ENCODE measurements at regions of chr5 and their contacts with region 1.

Region 1: GRCh38 chr5:154196955-154197652 is 6.6 kb downstream of the GALNT10 start:
- DNase-seq: peak; percentile 87
- ATAC-seq: peak; percentile 67
- H3K4me3 ChIP-seq: no peak overlapping the region
- H3K27ac ChIP-seq: peak overlapping the region; percentile 13; the same call in 1 of the 2 replicates
- H3K4me1 ChIP-seq: peaks cover 39% of the 10 kb centered on the region
- H3K27me3 ChIP-seq: no peaks in the 10 kb centered on the region
- CTCF ChIP-seq: peak; percentile 70
- POLR2A ChIP-seq: no peak
- RAD21 ChIP-seq: peak; percentile 51

Region 2: DNA sequence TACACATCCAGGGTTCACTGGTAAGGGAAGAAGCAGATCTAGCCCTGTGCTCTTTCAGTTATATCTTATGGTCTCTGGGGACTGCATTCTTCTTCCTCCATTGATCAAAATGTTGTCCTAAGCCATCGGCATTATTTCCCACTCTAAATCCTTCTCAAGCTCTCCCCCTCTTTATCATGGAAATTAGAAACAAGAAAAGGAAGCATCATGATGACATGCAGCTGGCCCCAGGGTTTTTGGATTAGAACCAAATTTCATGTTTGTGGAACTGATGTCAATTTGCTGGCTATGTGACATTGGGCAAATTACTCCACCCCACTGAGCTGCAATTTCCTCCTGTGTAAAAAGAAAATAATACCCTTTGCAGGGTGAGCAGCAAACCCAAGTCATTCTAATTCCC is 118.8 kb before region 1 on chr5:
- CTCF ChIA-PET with region 1: no interaction called
- POLR2A ChIA-PET with region 1: no interaction called
- dilution Hi-C with region 1: no loop called
- in situ Hi-C with region 1: no loop called
- intact Hi-C with region 1: no loop called
- DNase-seq: no peak
- ATAC-seq: no peak
- H3K4me3 ChIP-seq: no peak overlapping the region
- H3K27ac ChIP-seq: no peak overlapping the region
- H3K4me1 ChIP-seq: no peaks in the 10 kb centered on the region
- H3K27me3 ChIP-seq: peaks cover 6% of the 10 kb centered on the region
- CTCF ChIP-seq: no peak
- POLR2A ChIP-seq: no peak
- RAD21 ChIP-seq: no peak

Region 3: GRCh38 chr5:154147666-154148065 is 49.4 kb before region 1 on chr5:
- CTCF ChIA-PET with region 1: no interaction called
- POLR2A ChIA-PET with region 1: no interaction called
- dilution Hi-C with region 1: no loop called
- in situ Hi-C with region 1: no loop called
- intact Hi-C with region 1: no loop called
- DNase-seq: no peak
- ATAC-seq: no peak
- H3K4me3 ChIP-seq: no peak overlapping the region
- H3K27ac ChIP-seq: no peak overlapping the region
- H3K4me1 ChIP-seq: no peaks in the 10 kb centered on the region
- H3K27me3 ChIP-seq: peaks cover 17% of the 10 kb centered on the region
- CTCF ChIP-seq: no peak
- POLR2A ChIP-seq: no peak
- RAD21 ChIP-seq: no peak

Region 4: GRCh38 chr5:154273028-154273617 is 76.0 kb after region 1 on chr5:
- CTCF ChIA-PET with region 1: interaction called, 4 read pairs
- POLR2A ChIA-PET with region 1: no interaction called
- dilution Hi-C with region 1: no loop called
- in situ Hi-C with region 1: no loop called
- intact Hi-C with region 1: loop called (anchors 2 kb)
- DNase-seq: peak; percentile 21
- ATAC-seq: no peak
- H3K4me3 ChIP-seq: no peak overlapping the region
- H3K27ac ChIP-seq: no peak overlapping the region
- H3K4me1 ChIP-seq: peaks cover 27% of the 10 kb centered on the region
- H3K27me3 ChIP-seq: no peaks in the 10 kb centered on the region
- CTCF ChIP-seq: no peak
- POLR2A ChIP-seq: no peak
- RAD21 ChIP-seq: no peak

Region 5: GRCh38 chr5:154287136-154287535 is 90.0 kb after region 1 on chr5:
- CTCF ChIA-PET with region 1: interaction called, 5 read pairs
- POLR2A ChIA-PET with region 1: no interaction called
- dilution Hi-C with region 1: no loop called
- in situ Hi-C with region 1: no loop called
- intact Hi-C with region 1: loop called (anchors 2 kb)
- DNase-seq: peak; percentile 87
- ATAC-seq: peak; percentile 69
- H3K4me3 ChIP-seq: no peak overlapping the region
- H3K27ac ChIP-seq: no peak overlapping the region
- H3K4me1 ChIP-seq: peaks cover 18% of the 10 kb centered on the region
- H3K27me3 ChIP-seq: no peaks in the 10 kb centered on the region
- CTCF ChIP-seq: no peak
- POLR2A ChIP-seq: no peak
- RAD21 ChIP-seq: no peak

Region 6: GRCh38 chr5:154368041-154368800 is 171.1 kb after region 1 on chr5:
- CTCF ChIA-PET with region 1: interaction called, 5 read pairs
- POLR2A ChIA-PET with region 1: interaction called, 6 read pairs
- dilution Hi-C with region 1: no loop called
- in situ Hi-C with region 1: no loop called
- intact Hi-C with region 1: loop called (anchors 2 kb)
- DNase-seq: peak; percentile 95
- ATAC-seq: peak; percentile 70
- H3K4me3 ChIP-seq: no peak overlapping the region
- H3K27ac ChIP-seq: peak overlapping the region; percentile 78; the same call in 1 of the 2 replicates
- H3K4me1 ChIP-seq: peaks cover 36% of the 10 kb centered on the region
- H3K27me3 ChIP-seq: no peaks in the 10 kb centered on the region
- CTCF ChIP-seq: no peak
- POLR2A ChIP-seq: no peak; the same call in 1 of the 2 replicates
- RAD21 ChIP-seq: no peak

Region 7: DNA sequence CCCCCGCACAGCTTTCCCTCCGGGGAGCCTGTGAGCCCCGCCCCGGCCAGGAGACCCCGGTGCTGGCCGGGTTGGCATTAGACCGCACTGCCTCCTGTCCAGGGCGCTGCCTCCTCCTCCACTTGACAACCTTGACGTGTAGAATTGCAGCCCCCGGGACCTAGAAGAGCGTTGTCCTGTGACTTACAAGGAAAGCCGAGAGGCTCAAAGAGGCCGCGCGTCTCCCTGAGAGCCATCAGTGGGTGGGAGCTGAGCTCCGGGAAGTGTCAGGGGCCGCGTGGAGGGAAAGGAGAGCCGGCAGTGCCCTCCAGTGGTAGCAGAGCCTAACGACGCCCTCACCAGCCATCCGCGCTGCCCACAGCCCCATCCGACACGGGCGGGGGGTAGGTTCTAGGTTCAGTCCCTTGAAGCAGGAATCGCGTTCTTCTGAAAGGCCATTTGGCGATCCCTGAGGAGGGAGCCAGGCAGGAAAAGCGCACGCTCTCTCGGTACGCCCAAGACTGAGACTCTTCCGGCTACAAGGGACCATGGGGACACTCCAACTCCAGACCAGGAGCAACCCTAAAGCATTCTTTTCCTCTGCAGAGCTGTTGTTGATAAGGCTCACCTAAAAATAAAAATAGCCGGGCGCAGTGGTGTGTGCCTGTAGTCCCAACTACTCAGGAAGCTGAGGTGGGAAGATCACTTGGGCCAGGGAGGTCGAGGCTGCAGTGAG is 208.1 kb after region 1 on chr5:
- CTCF ChIA-PET with region 1: interaction called, 26 read pairs
- POLR2A ChIA-PET with region 1: no interaction called
- dilution Hi-C with region 1: no loop called
- in situ Hi-C with region 1: no loop called
- intact Hi-C with region 1: no loop called
- DNase-seq: peak; percentile 68
- ATAC-seq: peak; percentile 98
- H3K4me3 ChIP-seq: peak overlapping the region; percentile 23; the same call in 1 of the 2 replicates
- H3K27ac ChIP-seq: peak overlapping the region; percentile 28; the same call in 1 of the 2 replicates
- H3K4me1 ChIP-seq: peaks cover 3% of the 10 kb centered on the region; the same call in 1 of the 2 replicates
- H3K27me3 ChIP-seq: no peaks in the 10 kb centered on the region
- CTCF ChIP-seq: peak; percentile 91
- POLR2A ChIP-seq: peak; percentile 44; the same call in 1 of the 2 replicates
- RAD21 ChIP-seq: peak; percentile 97

Region 8: DNA sequence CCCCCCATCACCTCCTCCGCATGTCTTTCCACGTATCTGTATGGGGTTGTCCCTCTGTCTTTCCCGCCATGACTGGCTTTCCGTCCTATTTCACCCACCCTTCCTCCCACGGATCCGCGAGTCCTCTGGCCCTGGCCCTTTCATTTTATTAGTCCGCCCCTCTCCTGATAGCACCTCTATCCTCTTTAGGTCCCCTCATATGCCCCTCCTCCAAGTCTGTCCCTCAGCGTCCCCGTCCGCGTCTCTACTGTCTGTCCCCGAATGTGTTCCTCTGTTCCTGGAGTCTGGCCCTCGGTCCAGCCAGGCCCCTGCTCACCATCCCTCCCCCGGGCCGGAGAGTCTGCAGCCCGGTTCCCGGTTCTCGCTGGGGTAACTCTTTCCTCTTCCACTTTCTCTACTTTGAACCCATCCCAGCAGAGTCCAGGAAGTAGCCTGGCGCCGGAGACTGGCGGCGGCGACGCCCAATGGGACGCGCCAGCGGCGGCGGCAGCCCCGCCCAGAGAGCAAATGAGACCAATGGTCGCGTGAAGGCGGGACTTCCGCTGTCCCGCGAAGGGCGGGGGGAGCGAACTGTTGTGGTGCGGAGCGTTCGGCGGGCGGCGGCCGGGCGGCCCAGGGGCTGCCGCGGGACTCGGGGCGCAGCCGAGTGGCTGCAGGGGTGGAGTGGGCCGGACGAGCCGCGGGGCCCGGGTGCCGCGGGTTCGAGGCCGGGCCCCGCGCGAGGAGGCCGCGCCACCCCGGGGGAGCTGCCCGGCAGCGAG is 248.5 kb after region 1 on chr5 and contains the start of gene SAP30L:
- CTCF ChIA-PET with region 1: no interaction called
- POLR2A ChIA-PET with region 1: no interaction called
- dilution Hi-C with region 1: no loop called
- in situ Hi-C with region 1: no loop called
- intact Hi-C with region 1: loop called (anchors 2 kb)
- DNase-seq: peak; percentile 89
- ATAC-seq: peak; percentile 93
- H3K4me3 ChIP-seq: peak within 1 kb of the TSS; percentile 97
- H3K27ac ChIP-seq: peak within 1 kb of the TSS; percentile 84
- H3K4me1 ChIP-seq: peaks cover 7% of the 10 kb centered on the region
- H3K27me3 ChIP-seq: no peaks in the 10 kb centered on the region
- CTCF ChIP-seq: no peak
- POLR2A ChIP-seq: peak; percentile 54; the same call in 1 of the 2 replicates
- RAD21 ChIP-seq: no peak
- total RNA-seq, gene SAP30L: 9.7 and 13.1 TPM in 2 replicates

Region 9: DNA sequence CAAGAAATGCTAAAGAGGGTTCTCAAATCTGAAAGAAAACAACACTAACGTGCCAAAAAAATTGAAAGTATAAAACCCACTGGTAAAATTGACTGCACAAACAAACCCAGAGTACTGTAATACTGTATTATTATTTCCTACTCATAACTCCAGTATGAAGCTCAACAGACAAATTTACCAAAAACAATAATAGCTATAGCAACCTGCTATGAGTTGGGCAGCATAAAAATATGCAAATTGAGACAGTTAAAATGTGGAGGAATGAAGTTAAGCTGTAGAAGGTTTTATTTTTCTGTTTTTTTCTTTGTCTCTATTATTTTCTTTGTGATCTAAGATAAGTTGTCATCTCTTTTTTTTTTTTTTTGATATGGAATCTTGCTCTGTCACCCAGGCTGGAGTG is 832.1 kb after region 1 on chr5:
- CTCF ChIA-PET with region 1: no interaction called
- POLR2A ChIA-PET with region 1: no interaction called
- dilution Hi-C with region 1: no loop called
- in situ Hi-C with region 1: no loop called
- intact Hi-C with region 1: no loop called
- DNase-seq: no peak
- ATAC-seq: no peak
- H3K4me3 ChIP-seq: no peak overlapping the region
- H3K27ac ChIP-seq: no peak overlapping the region
- H3K4me1 ChIP-seq: no peaks in the 10 kb centered on the region
- H3K27me3 ChIP-seq: no peaks in the 10 kb centered on the region
- CTCF ChIP-seq: no peak
- POLR2A ChIP-seq: no peak
- RAD21 ChIP-seq: no peak